Transverse colon (tissue), 4 donors: ENCODE measurements at regions of chr15 and their contacts with region 1.

Region 1: GRCh38 chr15:74781431-74782258 is at the start of gene CSK:
- DNase-seq: peak; percentile 81
- H3K4me3 ChIP-seq: peak within 1 kb of the TSS; percentile 60 to 93 (median 75)
- H3K27ac ChIP-seq: peak within 1 kb of the TSS; percentile 84 to 92 (median 86)
- H3K4me1 ChIP-seq: peaks cover 41 to 91% (median 71%) of the 10 kb centered on the region in 4 donors
- H3K27me3 ChIP-seq: no peaks in the 10 kb centered on the region
- CTCF ChIP-seq: peak; percentile 53 to 63 (median 60)
- EP300 ChIP-seq: no peak
- POLR2A ChIP-seq: no peak
- total RNA-seq, gene CSK: 59.7 to 176 (median 73.4) TPM

Region 2: GRCh38 chr15:74748322-74748946 is 33.2 kb before region 1 on chr15 and contains the start of gene CYP1A2:
- in situ Hi-C with region 1: no loop called
- intact Hi-C with region 1: no loop called
- DNase-seq: no peak
- H3K4me3 ChIP-seq: no peak within 1 kb of the TSS
- H3K27ac ChIP-seq: no peak within 1 kb of the TSS
- H3K4me1 ChIP-seq: no peaks in the 10 kb centered on the region
- H3K27me3 ChIP-seq: no peaks in the 10 kb centered on the region
- CTCF ChIP-seq: no peak
- EP300 ChIP-seq: no peak
- POLR2A ChIP-seq: no peak
- total RNA-seq, gene CYP1A2: not detected

Region 3: GRCh38 chr15:74950078-74951000 is 168.7 kb after region 1 on chr15:
- in situ Hi-C with region 1: loop called in 2 of 4 experiments (anchors 10 kb)
- intact Hi-C with region 1: no loop called
- DNase-seq: peak; percentile 84
- H3K4me3 ChIP-seq: no peak overlapping the region
- H3K27ac ChIP-seq: no peak overlapping the region
- H3K4me1 ChIP-seq: peaks cover 13 to 19% (median 15%) of the 10 kb centered on the region in 4 donors
- H3K27me3 ChIP-seq: no peaks in the 10 kb centered on the region
- CTCF ChIP-seq: peak; percentile 96 to 99 (median 99)
- EP300 ChIP-seq: no peak
- POLR2A ChIP-seq: no peak